Ovary (tissue), 10 donors: ENCODE measurements at regions of chr1 and their contacts with region 1.

Region 1: GRCh38 chr1:244163861-244164562 is 112.9 kb downstream of the ZBTB18 start:
- DNase-seq: no peak
- H3K4me3 ChIP-seq: no peak overlapping the region
- H3K27ac ChIP-seq: no peak overlapping the region
- H3K4me1 ChIP-seq: no peaks in the 10 kb centered on the region
- H3K27me3 ChIP-seq: no peaks in the 10 kb centered on the region
- CTCF ChIP-seq: no peak
- EP300 ChIP-seq: no peak
- POLR2A ChIP-seq: no peak

Region 2: DNA sequence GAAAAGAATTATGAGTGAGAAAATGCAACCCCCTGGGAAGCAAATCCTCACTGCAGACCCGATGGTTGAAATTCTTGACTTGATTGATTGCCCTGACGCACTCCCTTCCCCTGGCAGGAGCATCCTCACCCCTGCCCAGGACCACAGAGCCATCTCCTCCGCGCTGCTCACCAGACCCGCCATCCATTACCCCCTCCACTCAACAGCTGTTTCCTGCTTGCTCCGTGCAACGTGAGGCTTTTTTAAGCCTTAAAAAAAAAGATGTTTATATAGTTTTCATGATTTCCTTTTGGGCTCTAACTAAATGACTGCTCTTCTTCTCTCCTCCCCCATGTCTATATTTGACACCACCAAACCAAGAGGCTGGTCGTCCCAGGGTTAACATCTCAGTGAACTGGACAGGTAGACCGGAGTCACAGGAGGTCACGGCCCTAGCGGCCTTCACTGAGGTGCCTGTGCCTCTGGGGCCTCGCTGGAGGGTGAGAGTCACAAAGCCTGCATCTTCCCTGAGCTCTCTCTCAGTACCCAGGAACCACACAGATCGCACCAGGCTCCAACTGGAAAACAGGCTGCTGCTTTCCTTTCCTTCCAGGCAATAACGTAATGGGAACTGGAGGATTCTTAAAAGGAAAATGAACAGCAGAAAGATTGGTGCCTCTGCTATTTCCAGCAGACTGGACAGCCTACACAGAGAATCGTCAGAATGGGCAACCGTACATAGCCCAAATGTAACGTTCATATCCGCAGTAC is 63.1 kb before region 1 on chr1:
- intact Hi-C with region 1: loop called in 1 of 4 experiments (anchors 2 kb)
- DNase-seq: no peak
- H3K4me3 ChIP-seq: no peak overlapping the region
- H3K27ac ChIP-seq: no peak overlapping the region
- H3K4me1 ChIP-seq: no peaks in the 10 kb centered on the region
- H3K27me3 ChIP-seq: no peaks in the 10 kb centered on the region
- CTCF ChIP-seq: no peak
- EP300 ChIP-seq: no peak
- POLR2A ChIP-seq: no peak